ENCODE measurements at regions of chr7 and their contacts with region 1.

Region 1: GRCh38 chr7:39732837-39733804 is 109.7 kb downstream of the RALA start:
- DNase-seq: peak; percentile 93 to 99 (median 95)
- H3K4me3 ChIP-seq: peak overlapping the region; percentile 41 to 77 (median 66)
- H3K4me3 Mint-ChIP-seq: peak overlapping the region; percentile 86 to 92
- H3K27ac ChIP-seq: peak overlapping the region; percentile 86 to 98
- H3K27ac Mint-ChIP-seq: peak overlapping the region; percentile 96 to 99 (median 97)
- H3K4me1 ChIP-seq: peaks cover 34 to 42% of the 10 kb centered on the region in 2 donors
- H3K4me1 Mint-ChIP-seq: peaks cover 41% of the 10 kb centered on the region
- H3K27me3 ChIP-seq: no peaks in the 10 kb centered on the region
- H3K27me3 Mint-ChIP-seq: peaks cover 0 to 2% (median 0%) of the 10 kb centered on the region in 3 donors
- CTCF ChIP-seq: no peak

Region 2: DNA sequence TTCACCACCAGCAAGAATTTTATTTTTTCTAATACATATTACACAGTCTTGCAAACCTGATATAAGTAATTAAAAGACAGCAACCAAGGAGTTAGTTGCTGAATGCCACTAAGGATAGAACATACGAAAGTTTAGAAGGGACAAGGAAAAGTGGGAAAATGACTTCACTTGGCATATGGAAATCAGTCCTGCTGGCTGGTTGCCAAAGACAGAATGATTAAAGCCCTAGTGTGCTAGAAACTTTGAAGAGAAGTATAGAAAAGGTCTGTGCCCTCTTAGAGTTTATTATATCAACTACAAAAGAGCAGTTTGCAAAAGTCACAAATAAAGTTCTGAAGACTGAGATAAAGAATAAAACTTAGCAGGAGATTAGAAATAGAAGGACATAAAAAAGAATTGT is 172.7 kb before region 1 on chr7:
- intact Hi-C with region 1: no loop called
- DNase-seq: no peak
- H3K4me3 ChIP-seq: no peak overlapping the region
- H3K4me3 Mint-ChIP-seq: no peak overlapping the region
- H3K27ac ChIP-seq: no peak overlapping the region
- H3K27ac Mint-ChIP-seq: no peak overlapping the region
- H3K4me1 ChIP-seq: no peaks in the 10 kb centered on the region
- H3K4me1 Mint-ChIP-seq: peaks cover 3% of the 10 kb centered on the region
- H3K27me3 ChIP-seq: no peaks in the 10 kb centered on the region
- H3K27me3 Mint-ChIP-seq: peaks cover 0 to 5% (median 2%) of the 10 kb centered on the region in 3 donors
- CTCF ChIP-seq: no peak

Region 3: DNA sequence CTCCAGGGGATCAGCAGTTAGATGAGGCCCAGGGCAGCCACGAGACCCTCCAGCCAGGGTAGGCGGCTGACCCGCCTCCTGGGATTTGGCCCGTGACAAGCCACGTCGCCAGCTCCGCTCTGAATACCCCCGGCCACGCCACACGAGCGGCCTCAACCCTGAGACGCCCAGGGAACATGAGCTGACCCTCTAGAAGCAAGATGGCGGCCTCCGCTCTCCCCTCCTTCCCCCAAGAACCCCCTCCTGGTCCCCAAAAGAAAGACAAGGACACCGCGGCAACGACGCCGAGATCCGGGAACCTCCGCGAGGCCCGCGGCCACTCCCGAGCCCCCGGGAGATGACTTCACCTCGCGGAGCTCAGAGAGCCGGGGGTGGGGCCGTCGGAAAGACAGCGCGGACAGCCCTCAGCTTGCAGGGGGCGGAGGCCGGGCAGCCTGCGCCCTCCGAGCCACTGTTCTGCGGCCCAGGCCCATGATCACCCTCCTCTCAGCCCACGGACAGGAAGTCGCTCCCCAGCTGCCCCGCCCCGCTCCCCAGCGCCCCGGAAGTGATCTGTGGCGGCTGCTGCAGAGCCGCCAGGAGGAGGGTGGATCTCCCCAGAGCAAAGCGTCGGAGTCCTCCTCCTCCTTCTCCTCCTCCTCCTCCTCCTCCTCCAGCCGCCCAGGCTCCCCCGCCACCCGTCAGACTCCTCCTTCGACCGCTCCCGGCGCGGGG is 109.9 kb before region 1 on chr7 and contains the start of gene RALA:
- intact Hi-C with region 1: loop called in 1 of 2 experiments (anchors 5 kb)
- DNase-seq: peak; percentile 80 to 87 (median 84)
- H3K4me3 ChIP-seq: peak within 1 kb of the TSS; percentile 65 to 84 (median 71)
- H3K4me3 Mint-ChIP-seq: peak within 1 kb of the TSS; percentile 89 to 92
- H3K27ac ChIP-seq: peak within 1 kb of the TSS; percentile 78 to 94
- H3K27ac Mint-ChIP-seq: peak within 1 kb of the TSS; percentile 79 to 97 (median 93)
- H3K4me1 ChIP-seq: peaks cover 34% of the 10 kb centered on the region in 2 donors
- H3K4me1 Mint-ChIP-seq: peaks cover 42% of the 10 kb centered on the region
- H3K27me3 ChIP-seq: no peaks in the 10 kb centered on the region
- H3K27me3 Mint-ChIP-seq: peaks cover 0 to 3% (median 2%) of the 10 kb centered on the region in 3 donors
- CTCF ChIP-seq: no peak
- polyA plus RNA-seq, gene RALA: 5.9 to 32.0 (median 30.8) TPM

Region 4: DNA sequence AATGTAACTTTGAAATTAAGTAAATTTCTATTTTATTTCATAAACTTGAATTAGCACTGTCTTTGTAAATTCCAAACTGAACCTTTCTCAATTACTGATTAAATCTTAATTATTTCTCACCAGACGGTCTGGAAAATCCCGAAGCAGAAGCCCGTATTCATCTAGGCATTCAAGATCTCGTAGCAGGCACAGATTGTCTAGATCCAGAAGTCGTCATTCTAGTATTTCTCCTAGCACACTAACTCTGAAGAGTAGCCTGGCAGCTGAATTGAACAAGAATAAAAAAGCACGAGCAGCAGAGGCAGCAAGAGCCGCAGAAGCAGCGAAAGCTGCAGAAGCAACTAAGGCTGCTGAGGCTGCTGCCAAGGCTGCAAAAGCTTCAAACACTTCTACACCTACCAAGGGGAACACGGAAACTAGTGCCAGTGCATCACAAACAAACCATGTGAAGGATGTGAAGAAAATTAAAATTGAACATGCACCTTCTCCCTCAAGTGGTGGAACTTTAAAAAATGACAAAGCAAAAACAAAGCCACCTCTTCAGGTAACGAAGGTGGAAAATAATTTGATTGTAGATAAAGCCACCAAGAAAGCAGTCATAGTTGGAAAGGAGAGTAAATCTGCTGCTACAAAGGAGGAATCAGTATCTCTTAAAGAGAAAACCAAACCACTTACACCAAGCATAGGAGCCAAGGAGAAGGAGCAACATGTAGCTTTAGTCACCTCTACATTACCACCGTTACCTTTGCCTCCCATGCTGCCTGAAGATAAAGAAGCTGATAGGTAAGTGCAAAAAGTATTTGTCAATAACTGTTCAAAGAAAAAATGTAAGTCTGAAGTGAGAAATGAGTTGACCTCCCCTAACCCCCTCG is 254.6 kb after region 1 on chr7:
- intact Hi-C with region 1: no loop called
- DNase-seq: no peak
- H3K4me3 ChIP-seq: no peak overlapping the region
- H3K4me3 Mint-ChIP-seq: no peak overlapping the region
- H3K27ac ChIP-seq: no peak overlapping the region
- H3K27ac Mint-ChIP-seq: peak overlapping the region in 1 of 7 donors; percentile 63
- H3K4me1 ChIP-seq: peaks cover 24 to 31% of the 10 kb centered on the region in 2 donors
- H3K4me1 Mint-ChIP-seq: peaks cover 32% of the 10 kb centered on the region
- H3K27me3 ChIP-seq: no peaks in the 10 kb centered on the region
- H3K27me3 Mint-ChIP-seq: no peaks in the 10 kb centered on the region
- CTCF ChIP-seq: no peak

Measured in CD14-positive monocyte (primary cell).